ENCODE measurements at regions of chr3 and their contacts with region 1.

Region 1: GRCh38 chr3:116757315-116757714 is 47.7 kb downstream of the TUSC7 start:
- DNase-seq: no peak
- H3K4me3 ChIP-seq: no peak overlapping the region
- H3K27ac ChIP-seq: no peak overlapping the region
- H3K4me1 ChIP-seq: no peaks in the 10 kb centered on the region
- H3K27me3 ChIP-seq: peaks cover 3% of the 10 kb centered on the region
- CTCF ChIP-seq: no peak

Region 2: GRCh38 chr3:115819785-115820384 is 937.4 kb before region 1 on chr3:
- CTCF ChIA-PET with region 1: no interaction called
- dilution Hi-C with region 1: no loop called
- in situ Hi-C with region 1: no loop called
- intact Hi-C with region 1: loop called (anchors 2 kb)
- DNase-seq: peak; percentile 64
- H3K4me3 ChIP-seq: no peak overlapping the region
- H3K27ac ChIP-seq: no peak overlapping the region
- H3K4me1 ChIP-seq: peaks cover 10% of the 10 kb centered on the region
- H3K27me3 ChIP-seq: no peaks in the 10 kb centered on the region
- CTCF ChIP-seq: peak; percentile 97 to 100

Region 3: DNA sequence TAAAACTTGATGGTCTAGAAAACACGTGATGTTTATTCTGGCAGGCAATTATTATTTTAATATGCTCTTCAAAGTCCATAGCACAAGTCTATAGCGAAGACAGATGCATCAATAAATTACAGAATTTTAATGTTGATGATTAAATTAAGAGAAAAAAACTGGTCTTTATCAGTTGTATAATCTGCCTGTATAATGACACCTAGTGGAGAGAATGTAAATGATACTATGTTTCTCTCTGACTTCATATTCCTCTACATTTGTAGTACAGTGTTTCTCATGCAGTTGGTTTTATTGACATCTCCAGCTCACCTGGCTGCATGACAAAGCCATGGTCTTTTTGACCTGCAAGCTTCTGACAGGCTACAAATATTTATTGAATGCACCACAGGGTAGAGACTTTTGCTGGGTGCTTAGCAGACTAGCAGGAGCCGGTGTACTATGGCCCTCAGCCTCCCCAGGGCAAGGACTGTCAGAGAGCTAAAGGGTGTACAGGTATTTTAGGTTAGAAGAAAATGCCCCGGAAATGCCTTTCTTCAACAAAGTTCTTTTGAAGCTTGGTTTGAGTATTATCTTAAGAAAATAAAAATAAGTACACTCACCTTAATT is 844.1 kb before region 1 on chr3:
- CTCF ChIA-PET with region 1: no interaction called
- dilution Hi-C with region 1: no loop called
- in situ Hi-C with region 1: no loop called
- intact Hi-C with region 1: loop called (anchors 10 kb)
- DNase-seq: no peak
- H3K4me3 ChIP-seq: no peak overlapping the region
- H3K27ac ChIP-seq: no peak overlapping the region
- H3K4me1 ChIP-seq: no peaks in the 10 kb centered on the region
- H3K27me3 ChIP-seq: peaks cover 2% of the 10 kb centered on the region
- CTCF ChIP-seq: peak; percentile 48 to 58

Region 4: GRCh38 chr3:115986555-115987207 is 770.6 kb before region 1 on chr3:
- CTCF ChIA-PET with region 1: no interaction called
- dilution Hi-C with region 1: no loop called
- in situ Hi-C with region 1: no loop called
- intact Hi-C with region 1: loop called (anchors 2 kb)
- DNase-seq: peak; percentile 51
- H3K4me3 ChIP-seq: no peak overlapping the region
- H3K27ac ChIP-seq: no peak overlapping the region
- H3K4me1 ChIP-seq: no peaks in the 10 kb centered on the region
- H3K27me3 ChIP-seq: no peaks in the 10 kb centered on the region
- CTCF ChIP-seq: peak; percentile 55 to 64

Region 5: DNA sequence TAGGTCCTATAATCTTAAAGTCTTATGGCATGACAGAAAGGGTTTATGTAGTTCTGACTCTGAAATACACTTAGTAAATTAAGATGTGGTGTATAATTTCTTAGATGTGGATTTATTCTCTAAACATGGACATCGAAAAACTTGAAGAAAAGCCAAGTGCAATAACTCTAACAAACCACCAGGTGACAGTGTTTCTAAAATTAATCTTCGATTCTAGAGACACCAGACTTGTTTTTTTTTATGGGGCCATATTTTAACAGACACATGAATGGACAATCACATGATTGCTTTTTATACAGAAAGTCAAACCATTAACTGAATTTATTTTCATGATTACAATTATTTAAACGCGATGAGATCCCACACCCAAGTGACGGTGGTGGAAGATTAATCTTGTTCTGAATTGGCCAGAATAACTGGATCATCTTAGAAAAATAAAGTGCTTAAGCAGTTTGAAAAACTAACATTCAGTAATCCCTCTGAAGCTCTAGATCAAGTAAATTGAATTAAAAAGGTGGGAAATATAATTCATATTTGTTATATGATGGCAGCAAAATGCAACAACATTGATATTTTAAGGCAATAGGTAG is 617.1 kb before region 1 on chr3:
- CTCF ChIA-PET with region 1: no interaction called
- dilution Hi-C with region 1: no loop called
- in situ Hi-C with region 1: no loop called
- intact Hi-C with region 1: loop called (anchors 5 kb)
- DNase-seq: peak; percentile 15
- H3K4me3 ChIP-seq: no peak overlapping the region
- H3K27ac ChIP-seq: no peak overlapping the region
- H3K4me1 ChIP-seq: no peaks in the 10 kb centered on the region
- H3K27me3 ChIP-seq: no peaks in the 10 kb centered on the region
- CTCF ChIP-seq: peak; percentile 71 to 86

Region 6: DNA sequence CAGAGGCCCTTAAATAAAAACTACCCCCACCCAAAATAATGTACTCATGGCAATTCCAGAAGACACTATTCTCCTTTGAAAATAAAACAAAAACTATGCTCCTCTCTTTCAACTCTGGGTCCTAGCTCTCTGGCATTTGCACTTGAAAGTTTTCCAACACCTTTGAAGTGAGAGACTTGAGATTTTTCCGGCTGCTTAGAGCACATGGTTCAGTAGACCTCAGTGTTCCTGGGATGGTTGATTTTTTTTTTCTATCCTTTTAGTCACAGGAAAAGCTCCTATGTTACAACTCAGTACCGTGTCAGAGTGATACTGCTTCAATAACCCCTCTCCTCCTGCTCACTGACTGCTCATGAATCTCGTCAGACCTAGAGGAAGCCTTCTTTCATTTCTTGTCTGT is 166.1 kb before region 1 on chr3:
- CTCF ChIA-PET with region 1: no interaction called
- dilution Hi-C with region 1: loop called (anchors 10 kb)
- in situ Hi-C with region 1: no loop called
- intact Hi-C with region 1: no loop called
- DNase-seq: no peak
- H3K4me3 ChIP-seq: no peak overlapping the region
- H3K27ac ChIP-seq: no peak overlapping the region
- H3K4me1 ChIP-seq: no peaks in the 10 kb centered on the region
- H3K27me3 ChIP-seq: no peaks in the 10 kb centered on the region
- CTCF ChIP-seq: no peak

Region 7: GRCh38 chr3:116614795-116615362 is 142.4 kb before region 1 on chr3:
- CTCF ChIA-PET with region 1: interaction called, 4 read pairs
- dilution Hi-C with region 1: no loop called
- in situ Hi-C with region 1: no loop called
- intact Hi-C with region 1: loop called (anchors 1 kb)
- DNase-seq: peak; percentile 12
- H3K4me3 ChIP-seq: no peak overlapping the region
- H3K27ac ChIP-seq: no peak overlapping the region
- H3K4me1 ChIP-seq: no peaks in the 10 kb centered on the region
- H3K27me3 ChIP-seq: no peaks in the 10 kb centered on the region
- CTCF ChIP-seq: peak; percentile 48 to 55

Region 8: DNA sequence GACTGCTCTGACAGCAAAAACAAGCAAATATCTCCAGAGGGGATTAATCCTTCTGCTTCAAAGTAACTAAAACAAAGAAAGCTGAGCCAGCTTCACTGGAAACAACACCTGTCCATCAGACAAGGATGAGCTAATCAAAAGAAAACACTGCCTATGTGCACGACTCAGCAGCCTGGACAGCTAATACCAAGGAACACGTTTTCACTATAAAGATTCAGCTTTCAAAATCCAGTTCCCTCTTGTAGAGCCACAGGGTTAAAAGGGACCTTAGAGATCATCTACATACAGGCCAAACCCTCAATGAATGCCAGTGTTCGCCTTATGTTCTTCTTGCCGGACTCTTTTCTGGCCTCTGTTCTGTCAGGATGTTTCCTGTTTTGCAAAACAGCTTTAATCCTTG is 40.8 kb before region 1 on chr3:
- CTCF ChIA-PET with region 1: no interaction called
- dilution Hi-C with region 1: no loop called
- in situ Hi-C with region 1: no loop called
- intact Hi-C with region 1: no loop called
- DNase-seq: no peak
- H3K4me3 ChIP-seq: no peak overlapping the region
- H3K27ac ChIP-seq: no peak overlapping the region
- H3K4me1 ChIP-seq: no peaks in the 10 kb centered on the region
- H3K27me3 ChIP-seq: no peaks in the 10 kb centered on the region
- CTCF ChIP-seq: no peak

Measured in mammary epithelial cell (primary cell).